Activated CD4-positive, alpha-beta memory T cell treated with anti-CD3 and anti-CD28 coated beads for 36 hours (primary cell): ENCODE measurements at regions of chr10 and their contacts with region 1.

Region 1: GRCh38 chr10:104268716-104269645 is at the start of gene GSTO2:
- DNase-seq: peak; percentile 99
- H3K4me3 Mint-ChIP-seq: peak within 1 kb of the TSS; percentile 78
- H3K27ac Mint-ChIP-seq: peak within 1 kb of the TSS; percentile 95
- H3K4me1 Mint-ChIP-seq: peaks cover 39% of the 10 kb centered on the region
- H3K27me3 Mint-ChIP-seq: peaks cover under 1% of the 10 kb centered on the region
- total RNA-seq, gene GSTO2: 2.3 to 2.6 TPM

Region 2: DNA sequence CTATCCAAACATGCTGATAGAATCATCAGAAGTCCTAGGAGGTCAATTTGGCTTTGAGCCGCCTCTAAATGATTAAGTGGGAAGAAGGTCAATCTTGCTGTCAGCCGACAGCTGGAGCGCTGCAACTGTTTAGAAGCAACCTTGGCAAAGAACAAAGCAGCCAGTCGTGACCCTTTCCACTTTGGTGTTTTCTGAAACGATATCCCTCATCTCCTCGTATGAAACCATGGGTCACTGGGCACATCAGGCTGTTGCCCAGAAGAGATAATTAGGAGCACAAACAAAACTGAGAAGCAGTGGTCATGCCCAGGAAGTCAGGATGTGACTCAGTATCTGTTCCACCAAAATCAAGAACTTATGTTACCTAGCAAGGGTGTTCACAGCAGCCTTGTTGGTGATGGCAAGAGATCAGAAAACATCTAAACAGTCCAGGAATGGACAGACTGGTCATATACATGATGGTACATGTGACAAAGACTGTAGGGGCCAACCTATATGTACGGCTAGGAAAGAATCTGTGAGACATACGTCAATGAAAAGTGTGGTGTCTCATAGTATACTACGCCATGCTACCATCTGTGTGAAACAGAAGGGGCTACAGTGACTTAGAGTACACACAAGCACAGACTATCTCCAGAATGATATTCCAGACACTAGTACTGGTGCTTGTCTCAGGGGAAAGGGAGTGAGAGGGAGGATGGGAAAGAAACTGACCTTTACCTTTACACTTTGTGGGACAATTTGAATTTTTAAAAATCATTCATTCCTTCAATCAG is 373.4 kb before region 1 on chr10:
- CTCF ChIA-PET with region 1: no interaction called
- POLR2A ChIA-PET with region 1: no interaction called
- intact Hi-C with region 1: loop called (anchors 2 kb)
- DNase-seq: peak; percentile 45
- H3K4me3 Mint-ChIP-seq: no peak overlapping the region
- H3K27ac Mint-ChIP-seq: peak overlapping the region; percentile 82
- H3K4me1 Mint-ChIP-seq: peaks cover 65% of the 10 kb centered on the region
- H3K27me3 Mint-ChIP-seq: no peaks in the 10 kb centered on the region

Region 3: DNA sequence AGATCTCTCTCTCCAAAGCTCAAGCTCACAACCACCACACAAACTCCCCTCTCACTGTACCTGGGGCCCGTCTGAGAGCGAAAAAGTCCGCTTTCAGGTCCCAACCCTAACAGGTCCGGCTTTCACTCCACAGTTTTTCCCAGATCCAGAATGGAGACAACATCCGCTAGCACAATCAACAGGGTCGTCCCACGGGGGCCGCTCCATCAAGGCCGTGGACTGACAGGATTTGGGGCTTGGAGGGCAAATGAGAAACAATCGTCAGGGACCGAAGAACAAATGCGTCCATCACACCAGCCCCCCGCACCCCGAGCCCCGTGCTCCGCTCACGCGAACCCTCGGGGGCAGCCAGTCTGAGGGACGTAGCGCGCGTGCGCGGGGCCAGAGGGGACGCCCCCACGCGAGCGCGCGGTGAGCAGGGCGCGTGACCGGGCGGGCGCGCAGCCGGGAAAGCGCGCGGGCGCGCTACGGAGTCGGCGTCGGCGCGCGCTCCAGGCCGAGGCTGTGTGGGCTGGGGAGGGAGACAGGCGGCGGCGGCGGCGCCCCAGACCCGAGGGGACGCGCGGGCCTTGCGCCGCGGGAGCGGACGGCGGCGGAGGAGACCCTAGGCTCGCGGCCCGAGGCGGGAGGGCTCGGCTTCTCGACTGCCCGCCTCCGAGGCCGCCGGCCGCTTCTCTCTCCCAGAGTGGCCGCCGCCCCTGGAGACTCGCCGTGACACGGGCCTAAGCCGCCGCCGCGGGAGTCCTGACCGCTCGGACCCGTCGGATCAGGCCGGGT is 302.1 kb before region 1 on chr10 and contains the start of gene SLK:
- CTCF ChIA-PET with region 1: no interaction called
- POLR2A ChIA-PET with region 1: no interaction called
- intact Hi-C with region 1: loop called (anchors 2 kb)
- DNase-seq: peak; percentile 86
- H3K4me3 Mint-ChIP-seq: peak within 1 kb of the TSS; percentile 94
- H3K27ac Mint-ChIP-seq: peak within 1 kb of the TSS; percentile 92
- H3K4me1 Mint-ChIP-seq: peaks cover 33% of the 10 kb centered on the region
- H3K27me3 Mint-ChIP-seq: no peaks in the 10 kb centered on the region
- total RNA-seq, gene SLK: 26.1 to 27.7 TPM

Region 4: GRCh38 chr10:104254493-104255310 is 14.3 kb before region 1 on chr10 and contains the start of gene GSTO1:
- CTCF ChIA-PET with region 1: interaction called, 48 read pairs
- POLR2A ChIA-PET with region 1: interaction called, 71 read pairs
- intact Hi-C with region 1: loop called (anchors 1 kb)
- DNase-seq: peak; percentile 73
- H3K4me3 Mint-ChIP-seq: peak within 1 kb of the TSS; percentile 93
- H3K27ac Mint-ChIP-seq: peak within 1 kb of the TSS; percentile 93
- H3K4me1 Mint-ChIP-seq: peaks cover 50% of the 10 kb centered on the region
- H3K27me3 Mint-ChIP-seq: peaks cover 3% of the 10 kb centered on the region
- total RNA-seq, gene GSTO1: 215 to 225 TPM

Region 5: DNA sequence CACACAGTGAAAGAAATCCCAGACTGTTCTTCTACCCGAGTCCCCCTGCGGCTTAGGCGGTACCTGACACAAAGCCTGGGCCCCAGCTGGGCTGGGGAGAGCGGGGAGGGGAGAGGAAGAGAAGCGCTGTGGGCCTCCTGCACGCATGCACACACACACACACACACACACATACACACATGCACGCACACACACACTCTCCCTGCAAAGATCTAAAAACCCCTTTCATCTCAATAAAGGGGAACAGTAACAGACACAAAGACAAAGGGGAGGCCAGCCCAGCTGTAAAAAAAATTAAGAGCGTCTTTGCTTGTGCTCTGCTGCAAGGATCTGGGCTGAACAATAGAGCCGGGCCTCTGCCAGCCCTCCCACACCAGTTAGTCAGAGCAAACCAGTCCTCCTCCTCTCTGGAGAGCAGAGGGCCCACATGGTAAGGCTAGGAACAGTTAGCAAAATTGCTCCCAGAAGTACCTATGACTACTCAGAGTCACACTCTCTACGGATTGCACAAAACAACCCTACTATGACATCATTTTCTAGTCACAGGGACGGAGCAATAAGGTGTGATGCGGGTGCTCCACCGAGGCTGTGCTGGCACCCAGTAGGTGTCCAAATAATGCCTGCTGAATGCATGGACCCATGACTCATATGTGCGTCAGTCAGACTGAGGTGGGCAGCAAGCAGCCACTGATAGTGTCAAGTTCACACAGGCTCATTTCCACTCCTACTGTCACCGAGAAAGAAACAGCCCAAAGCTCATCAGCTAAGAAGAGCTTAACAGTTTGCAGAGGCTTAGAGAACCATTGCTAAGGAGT is 60.1 kb after region 1 on chr10:
- CTCF ChIA-PET with region 1: interaction called, 3 read pairs
- POLR2A ChIA-PET with region 1: interaction called, 3 read pairs
- intact Hi-C with region 1: loop called (anchors 1 kb)
- DNase-seq: peak; percentile 92
- H3K4me3 Mint-ChIP-seq: peak overlapping the region; percentile 60
- H3K27ac Mint-ChIP-seq: peak overlapping the region; percentile 91
- H3K4me1 Mint-ChIP-seq: peaks cover 96% of the 10 kb centered on the region
- H3K27me3 Mint-ChIP-seq: no peaks in the 10 kb centered on the region

Region 6: GRCh38 chr10:104353325-104354048 is 84.5 kb after region 1 on chr10 and contains the start of gene CFAP58:
- CTCF ChIA-PET with region 1: interaction called, 55 read pairs
- POLR2A ChIA-PET with region 1: interaction called, 6 read pairs
- intact Hi-C with region 1: loop called (anchors 1 kb)
- DNase-seq: peak; percentile 94
- H3K4me3 Mint-ChIP-seq: peak within 1 kb of the TSS; percentile 10
- H3K27ac Mint-ChIP-seq: peak within 1 kb of the TSS; percentile 29
- H3K4me1 Mint-ChIP-seq: no peaks in the 10 kb centered on the region
- H3K27me3 Mint-ChIP-seq: no peaks in the 10 kb centered on the region
- total RNA-seq, gene CFAP58: 0.31 to 0.88 TPM

Region 7: GRCh38 chr10:104376784-104377300 is 107.9 kb after region 1 on chr10:
- CTCF ChIA-PET with region 1: no interaction called
- POLR2A ChIA-PET with region 1: no interaction called
- intact Hi-C with region 1: no loop called
- DNase-seq: no peak
- H3K4me3 Mint-ChIP-seq: no peak overlapping the region
- H3K27ac Mint-ChIP-seq: no peak overlapping the region
- H3K4me1 Mint-ChIP-seq: no peaks in the 10 kb centered on the region
- H3K27me3 Mint-ChIP-seq: peaks cover 21% of the 10 kb centered on the region